Mammary epithelial cell (primary cell): ENCODE measurements at regions of chr7 and their contacts with region 1.

Region 1: GRCh38 chr7:158302274-158303070 is 285.2 kb downstream of the PTPRN2 start:
- DNase-seq: no peak
- H3K4me3 ChIP-seq: no peak overlapping the region
- H3K27ac ChIP-seq: no peak overlapping the region
- H3K4me1 ChIP-seq: no peaks in the 10 kb centered on the region
- H3K27me3 ChIP-seq: no peaks in the 10 kb centered on the region
- CTCF ChIP-seq: no peak

Region 2: DNA sequence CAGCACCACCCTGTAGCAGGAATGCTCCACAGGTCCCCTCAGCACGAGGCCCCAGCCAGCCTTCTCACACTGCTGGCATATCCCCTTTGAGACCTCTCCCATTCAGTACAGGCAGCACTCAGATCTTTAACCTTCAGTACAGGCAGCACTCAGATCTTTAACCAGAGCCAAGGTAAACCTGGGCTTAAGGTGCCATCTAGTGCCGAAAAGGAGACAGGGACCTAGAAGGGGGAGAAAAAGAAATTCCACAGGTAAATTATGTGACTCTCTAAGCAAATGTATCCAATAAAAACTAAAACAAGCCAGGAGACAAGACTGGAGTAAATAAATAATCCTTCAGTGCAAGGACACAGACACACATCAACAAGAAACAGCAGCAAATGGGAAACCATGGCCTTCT is 73.5 kb before region 1 on chr7:
- CTCF ChIA-PET with region 1: no interaction called
- dilution Hi-C with region 1: loop called (anchors 5 kb)
- in situ Hi-C with region 1: no loop called
- intact Hi-C with region 1: no loop called
- DNase-seq: no peak
- H3K4me3 ChIP-seq: no peak overlapping the region
- H3K27ac ChIP-seq: no peak overlapping the region
- H3K4me1 ChIP-seq: no peaks in the 10 kb centered on the region
- H3K27me3 ChIP-seq: no peaks in the 10 kb centered on the region
- CTCF ChIP-seq: no peak